ENCODE measurements at regions of chr3 and their contacts with region 1.

Region 1: DNA sequence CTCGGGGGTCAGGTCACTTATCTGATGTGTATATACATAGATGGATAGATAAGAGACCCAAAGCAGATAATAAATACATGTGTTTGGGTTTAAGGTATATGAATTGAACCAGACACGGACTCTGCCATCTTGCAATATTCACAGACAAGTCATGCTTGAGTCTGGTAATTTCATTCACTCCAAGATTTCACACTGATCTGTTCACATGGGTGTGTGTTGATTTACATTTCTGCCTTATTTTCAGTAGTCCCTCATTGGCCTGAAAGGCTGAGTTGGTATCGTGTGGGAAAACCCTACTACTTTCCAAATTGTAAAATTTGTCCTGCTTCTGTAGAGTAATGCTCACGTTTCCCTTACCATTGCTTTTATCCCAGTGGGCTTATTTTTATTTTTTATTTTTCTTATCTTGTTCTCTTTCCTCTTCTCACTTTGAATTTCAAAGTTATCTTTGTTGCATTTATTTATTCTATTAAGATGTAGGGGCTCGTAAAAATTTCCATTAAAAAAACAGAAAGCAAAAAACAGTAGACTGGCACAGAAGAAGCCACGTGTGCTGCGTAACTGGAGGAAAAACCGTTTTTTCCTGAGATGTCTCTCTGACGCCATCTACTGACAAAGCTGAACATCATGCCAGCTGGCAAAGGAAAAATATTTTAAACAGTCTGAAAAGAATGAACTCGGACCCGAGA is 10.8 kb upstream of the MFSD1 start:
- DNase-seq: no peak
- ATAC-seq: peak in 3 of 4 donors; percentile 42 to 71 (median 50)
- H3K4me3 ChIP-seq: peak overlapping the region; percentile 35
- H3K27ac ChIP-seq: no peak overlapping the region
- H3K4me1 ChIP-seq: no peaks in the 10 kb centered on the region
- H3K27me3 ChIP-seq: no peaks in the 10 kb centered on the region
- CTCF ChIP-seq: peak; percentile 59

Region 2: DNA sequence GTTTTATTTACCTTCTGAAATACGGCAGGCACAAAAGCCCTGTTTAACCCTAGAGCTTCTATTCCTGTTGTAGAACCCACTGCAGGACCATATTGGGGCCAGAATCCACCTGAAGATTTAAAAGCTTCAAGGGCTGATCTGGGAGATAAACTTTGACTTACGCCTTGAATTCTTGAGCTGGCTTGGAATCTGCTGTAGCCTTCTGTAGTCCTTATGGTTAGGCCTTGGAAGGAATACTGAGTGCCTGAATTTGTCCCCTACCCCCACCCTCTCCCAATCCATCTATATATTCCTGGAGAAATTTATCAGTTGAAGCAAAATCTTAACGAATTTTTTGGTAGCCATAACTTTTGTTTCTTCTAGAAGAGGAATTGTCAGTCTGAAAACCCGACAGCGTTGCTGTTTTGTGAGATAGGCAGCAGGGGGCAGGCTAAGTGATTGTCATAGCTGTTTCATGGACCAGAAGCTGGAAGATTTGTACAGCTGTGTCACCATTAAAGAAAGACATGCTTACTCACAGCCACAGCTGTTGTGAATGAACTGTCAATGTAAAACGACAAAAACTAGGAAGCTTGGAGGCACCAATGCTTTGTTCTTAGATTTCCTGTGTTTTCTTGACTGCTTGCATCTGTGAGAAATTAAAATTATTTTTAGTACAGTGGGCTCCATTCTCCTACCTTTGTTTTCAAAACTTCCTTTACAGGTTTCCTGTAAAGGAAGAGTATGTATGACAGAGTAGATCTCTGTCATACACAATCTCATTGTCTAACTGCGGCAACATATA is 131.4 kb before region 1 on chr3:
- intact Hi-C with region 1: loop called in 1 of 2 experiments (anchors 5 kb)
- DNase-seq: peak in 1 of 2 donors; percentile 32
- ATAC-seq: peak; percentile 55 to 81 (median 74)
- H3K4me3 ChIP-seq: no peak overlapping the region
- H3K27ac ChIP-seq: peak overlapping the region; percentile 38
- H3K4me1 ChIP-seq: no peaks in the 10 kb centered on the region
- H3K27me3 ChIP-seq: no peaks in the 10 kb centered on the region
- CTCF ChIP-seq: peak; percentile 54

Region 3: DNA sequence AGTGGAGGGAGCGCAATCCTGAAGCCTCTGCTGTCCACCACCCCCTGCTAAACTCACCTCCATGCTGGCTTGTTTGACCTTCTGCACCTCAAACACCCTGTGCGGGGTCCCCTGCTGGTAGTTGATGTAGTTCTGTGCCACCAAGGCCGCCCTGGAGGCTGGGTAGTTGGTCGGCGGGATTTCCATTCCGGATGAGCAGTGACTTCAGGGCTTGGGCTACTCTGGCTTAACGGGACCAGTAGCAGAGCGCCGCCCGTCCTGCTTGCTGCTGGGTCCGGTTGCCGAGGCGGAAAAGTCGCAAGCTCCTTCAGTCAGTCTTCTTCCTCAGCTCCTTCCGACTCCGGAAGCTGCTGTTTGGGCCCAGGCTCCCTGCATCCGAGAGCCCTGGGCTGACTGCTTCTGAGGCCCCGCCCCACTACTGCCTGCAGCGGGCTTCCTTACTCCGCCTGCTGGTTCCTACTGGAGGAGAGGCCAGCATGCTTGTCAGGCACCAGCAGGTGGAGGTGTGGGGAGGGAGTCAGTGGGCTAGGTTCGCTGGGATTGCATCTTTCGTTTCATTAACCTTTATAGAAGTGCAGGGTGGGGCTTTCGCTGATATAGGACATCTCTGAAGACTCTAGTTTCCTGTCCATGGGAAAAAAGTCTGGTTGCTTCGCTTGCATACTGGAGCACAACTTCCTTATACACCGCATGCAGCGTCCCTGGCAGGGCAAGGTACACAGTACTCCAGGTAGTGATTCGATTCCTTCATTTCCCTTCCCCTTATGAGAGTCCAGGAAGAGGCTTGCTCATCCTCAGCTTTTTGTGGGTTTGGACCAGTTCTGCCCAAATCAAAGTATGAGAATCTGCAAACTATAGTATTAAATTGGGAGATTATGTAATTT is 118.5 kb before region 1 on chr3 and contains the start of gene LXN:
- intact Hi-C with region 1: loop called in 1 of 2 experiments (anchors 5 kb)
- DNase-seq: peak; percentile 75 to 81
- ATAC-seq: peak; percentile 67 to 81 (median 72)
- H3K4me3 ChIP-seq: peak within 1 kb of the TSS; percentile 65
- H3K27ac ChIP-seq: peak within 1 kb of the TSS; percentile 61
- H3K4me1 ChIP-seq: no peaks in the 10 kb centered on the region
- H3K27me3 ChIP-seq: no peaks in the 10 kb centered on the region
- CTCF ChIP-seq: peak; percentile 36
- total RNA-seq, gene LXN: 1.8 to 6.7 (median 3.6) TPM

Region 4: DNA sequence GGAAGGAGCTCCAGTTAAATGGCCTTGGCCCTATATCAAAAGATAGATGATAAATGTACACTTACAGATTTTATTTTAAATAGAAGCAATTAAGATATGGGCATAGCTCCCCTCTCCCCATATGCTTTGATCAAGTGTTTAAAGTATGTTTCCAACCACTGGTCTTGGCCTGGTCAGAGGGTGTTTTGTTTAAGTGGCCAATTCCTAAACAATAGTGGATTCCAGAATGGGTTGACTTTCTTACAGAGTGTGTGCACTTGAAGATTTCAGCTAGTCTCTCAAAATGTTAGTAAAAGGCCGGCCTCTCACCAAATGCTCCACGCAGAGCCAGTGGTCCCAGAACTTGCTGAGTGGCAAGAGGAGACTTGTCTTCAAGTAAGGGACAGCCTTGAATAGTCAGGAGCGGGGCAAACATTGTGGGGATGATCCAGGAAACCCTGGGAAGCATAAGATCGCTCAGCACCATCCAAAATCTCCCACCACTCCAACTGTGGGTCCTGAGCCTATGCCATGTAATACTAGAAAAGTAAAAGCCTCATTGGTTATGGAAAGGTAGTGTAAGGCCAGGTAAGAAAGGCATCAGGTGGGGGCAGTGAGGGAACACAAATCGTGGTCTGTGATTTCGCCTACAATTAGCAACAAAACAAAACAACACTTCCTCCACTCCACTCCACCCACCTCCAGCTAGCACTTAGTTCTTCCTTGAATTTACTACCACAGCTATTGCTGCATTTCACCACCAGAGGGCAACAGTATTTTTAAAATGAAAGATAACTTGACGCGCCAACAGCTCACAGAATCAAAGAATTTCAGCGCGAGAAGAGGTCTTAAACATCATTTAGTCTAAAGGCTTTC is 63.6 kb before region 1 on chr3:
- intact Hi-C with region 1: loop called (anchors 1 to 5 kb)
- DNase-seq: no peak
- ATAC-seq: peak; percentile 40 to 68 (median 54)
- H3K4me3 ChIP-seq: no peak overlapping the region
- H3K27ac ChIP-seq: peak overlapping the region; percentile 40
- H3K4me1 ChIP-seq: peaks cover 20% of the 10 kb centered on the region
- H3K27me3 ChIP-seq: no peaks in the 10 kb centered on the region
- CTCF ChIP-seq: peak; percentile 81

Measured in psoas muscle (tissue), 8 donors.